ENCODE measurements at regions of chr2 and their contacts with region 1.

Region 1: GRCh38 chr2:87996570-87996969 is 19.8 kb downstream of the RNU2-63P start:
- DNase-seq: no peak
- CTCF ChIP-seq: no peak

Region 2: GRCh38 chr2:86541334-86541733 is 1455.2 kb before region 1 on chr2:
- CTCF ChIA-PET with region 1: no interaction called
- POLR2A ChIA-PET with region 1: no interaction called
- DNase-seq: no peak
- CTCF ChIP-seq: no peak

Region 3: DNA sequence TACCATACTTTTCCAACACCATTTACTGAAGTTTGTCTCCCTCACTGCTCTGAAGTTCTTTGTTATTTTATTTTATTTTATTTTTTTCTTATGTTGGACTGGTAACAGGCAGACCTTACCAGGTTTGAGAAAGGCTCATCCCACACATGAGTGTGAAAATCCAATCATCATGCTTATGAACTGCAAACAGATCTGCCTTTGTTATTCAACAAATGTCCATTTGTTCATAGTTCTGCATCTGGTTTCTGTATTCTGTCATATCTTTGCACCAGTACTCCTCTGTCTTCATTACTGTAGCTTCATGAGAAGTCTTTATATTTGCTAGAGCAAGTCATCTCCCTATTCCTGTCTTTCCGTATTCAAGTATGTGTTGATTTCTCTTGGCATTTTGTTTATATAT is 14.4 kb after region 1 on chr2:
- CTCF ChIA-PET with region 1: interaction called, 35 read pairs
- POLR2A ChIA-PET with region 1: no interaction called
- DNase-seq: no peak
- CTCF ChIP-seq: no peak